PC-3 (cell line): ENCODE measurements at regions of chr21 and their contacts with region 1.

Region 1: DNA sequence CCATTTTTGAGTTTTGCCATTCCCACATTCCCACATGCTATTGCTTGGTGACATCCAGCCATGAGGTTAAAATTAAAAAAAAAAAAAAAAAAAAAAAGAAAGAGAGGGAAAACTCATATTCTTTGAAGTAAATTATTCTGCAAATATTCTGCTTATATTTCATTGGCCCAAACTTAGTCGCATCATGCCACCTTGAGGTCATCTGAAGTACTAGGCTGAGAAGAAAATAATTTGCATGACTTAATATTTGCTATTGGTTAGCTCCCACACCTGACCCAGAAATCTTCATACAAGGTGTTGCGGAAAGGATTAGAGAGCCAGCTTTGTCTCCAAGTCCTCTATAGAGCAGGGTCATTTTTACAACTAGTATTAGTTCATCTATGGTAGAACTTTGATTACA is 2206.0 kb downstream of the MRPL39 start:
- DNase-seq: peak; percentile 61
- ATAC-seq: peak; percentile 71; the same call in 1 of the 2 replicates
- H3K4me3 ChIP-seq: no peak overlapping the region
- H3K27ac ChIP-seq: no peak overlapping the region
- H3K4me1 ChIP-seq: no peaks in the 10 kb centered on the region
- H3K27me3 ChIP-seq: no peaks in the 10 kb centered on the region
- CTCF ChIP-seq: peak; percentile 68

Region 2: GRCh38 chr21:22670148-22670547 is 731.1 kb before region 1 on chr21:
- CTCF ChIA-PET with region 1: no interaction called
- POLR2A ChIA-PET with region 1: no interaction called
- intact Hi-C with region 1: no loop called
- DNase-seq: no peak
- ATAC-seq: no peak
- H3K4me3 ChIP-seq: no peak overlapping the region
- H3K27ac ChIP-seq: no peak overlapping the region
- H3K4me1 ChIP-seq: no peaks in the 10 kb centered on the region
- H3K27me3 ChIP-seq: no peaks in the 10 kb centered on the region
- CTCF ChIP-seq: no peak

Region 3: DNA sequence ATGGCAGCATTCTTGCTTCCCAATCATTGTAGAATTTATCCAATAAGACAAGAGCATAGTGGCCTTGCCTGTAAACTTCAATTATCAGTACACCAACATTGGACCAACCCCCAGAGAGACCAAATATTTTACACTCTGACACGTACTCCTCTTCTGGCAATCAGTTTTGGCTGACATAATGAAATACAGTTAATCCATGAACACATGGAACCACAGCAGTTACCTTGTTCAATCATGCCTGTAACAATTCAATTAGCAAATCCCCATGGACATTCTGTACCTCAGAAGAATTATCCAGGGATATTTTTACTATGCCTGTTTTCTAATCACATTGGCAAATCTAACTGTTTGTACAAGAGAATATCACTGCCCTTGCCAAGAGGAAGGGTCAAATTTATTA is 44.0 kb after region 1 on chr21:
- CTCF ChIA-PET with region 1: no interaction called
- POLR2A ChIA-PET with region 1: no interaction called
- intact Hi-C with region 1: no loop called
- DNase-seq: no peak
- ATAC-seq: no peak
- H3K4me3 ChIP-seq: no peak overlapping the region
- H3K27ac ChIP-seq: no peak overlapping the region
- H3K4me1 ChIP-seq: no peaks in the 10 kb centered on the region
- H3K27me3 ChIP-seq: no peaks in the 10 kb centered on the region
- CTCF ChIP-seq: no peak

Region 4: GRCh38 chr21:23578027-23578426 is 176.7 kb after region 1 on chr21:
- CTCF ChIA-PET with region 1: no interaction called
- POLR2A ChIA-PET with region 1: no interaction called
- intact Hi-C with region 1: loop called (anchors 5 kb)
- DNase-seq: no peak
- ATAC-seq: no peak
- H3K4me3 ChIP-seq: no peak overlapping the region
- H3K27ac ChIP-seq: no peak overlapping the region
- H3K4me1 ChIP-seq: no peaks in the 10 kb centered on the region
- H3K27me3 ChIP-seq: no peaks in the 10 kb centered on the region
- CTCF ChIP-seq: peak; percentile 43; the same call in 1 of the 2 replicates

Region 5: GRCh38 chr21:24076179-24076578 is 674.9 kb after region 1 on chr21:
- CTCF ChIA-PET with region 1: no interaction called
- POLR2A ChIA-PET with region 1: no interaction called
- intact Hi-C with region 1: loop called (anchors 5 kb)
- DNase-seq: peak; percentile 20
- ATAC-seq: no peak
- H3K4me3 ChIP-seq: no peak overlapping the region
- H3K27ac ChIP-seq: no peak overlapping the region
- H3K4me1 ChIP-seq: no peaks in the 10 kb centered on the region
- H3K27me3 ChIP-seq: no peaks in the 10 kb centered on the region
- CTCF ChIP-seq: peak; percentile 41; the same call in 1 of the 2 replicates